ENCODE measurements at regions of chr9 and their contacts with region 1.

Region 1: DNA sequence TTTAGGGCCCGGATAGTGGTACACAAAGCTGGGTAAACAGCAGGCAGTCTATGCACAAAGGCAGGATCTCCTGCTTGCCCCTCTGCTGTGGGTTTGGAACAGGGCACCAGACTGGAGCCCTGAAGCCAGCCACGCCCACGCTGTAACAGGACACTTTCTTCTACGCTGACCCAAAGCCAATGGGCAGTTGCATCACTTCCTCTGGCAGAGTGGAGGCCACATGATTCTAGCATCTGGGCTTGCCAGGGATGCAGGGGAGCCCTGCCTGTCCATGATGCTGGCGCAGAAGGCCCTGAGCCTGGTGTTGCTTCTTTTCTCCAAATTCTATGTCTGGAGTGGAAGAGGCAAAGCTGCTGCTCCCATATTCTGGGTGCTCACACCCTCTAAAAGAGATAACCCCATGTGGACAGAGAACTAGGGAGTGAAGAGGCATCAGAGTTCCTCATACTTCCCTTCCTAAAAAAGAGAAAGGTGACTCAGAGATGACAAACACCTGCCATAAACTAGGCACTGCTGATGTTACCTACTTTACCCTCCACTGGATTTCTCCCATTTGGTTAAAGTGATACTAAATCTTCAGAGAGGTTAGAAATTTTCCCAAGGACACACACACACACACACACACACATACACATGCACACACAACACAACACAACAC is 260.3 kb upstream of the KLF4 start:
- DNase-seq: peak; percentile 96
- ATAC-seq: peak; percentile 78
- H3K4me3 ChIP-seq: no peak overlapping the region
- H3K27ac ChIP-seq: peak overlapping the region; percentile 81
- H3K4me1 ChIP-seq: peaks cover 19% of the 10 kb centered on the region
- H3K27me3 ChIP-seq: no peaks in the 10 kb centered on the region
- CTCF ChIP-seq: no peak
- POLR2A ChIP-seq: no peak
- RAD21 ChIP-seq: no peak

Region 2: GRCh38 chr9:106878924-106879323 is 871.0 kb before region 1 on chr9:
- CTCF ChIA-PET with region 1: no interaction called
- POLR2A ChIA-PET with region 1: no interaction called
- dilution Hi-C with region 1: no loop called
- in situ Hi-C with region 1: loop called (anchors 25 kb)
- intact Hi-C with region 1: no loop called
- DNase-seq: peak; percentile 99
- ATAC-seq: peak; percentile 86
- H3K4me3 ChIP-seq: no peak overlapping the region
- H3K27ac ChIP-seq: peak overlapping the region; percentile 13; the same call in 1 of the 2 replicates
- H3K4me1 ChIP-seq: peaks cover 26% of the 10 kb centered on the region
- H3K27me3 ChIP-seq: no peaks in the 10 kb centered on the region
- CTCF ChIP-seq: no peak
- POLR2A ChIP-seq: no peak
- RAD21 ChIP-seq: no peak

Region 3: DNA sequence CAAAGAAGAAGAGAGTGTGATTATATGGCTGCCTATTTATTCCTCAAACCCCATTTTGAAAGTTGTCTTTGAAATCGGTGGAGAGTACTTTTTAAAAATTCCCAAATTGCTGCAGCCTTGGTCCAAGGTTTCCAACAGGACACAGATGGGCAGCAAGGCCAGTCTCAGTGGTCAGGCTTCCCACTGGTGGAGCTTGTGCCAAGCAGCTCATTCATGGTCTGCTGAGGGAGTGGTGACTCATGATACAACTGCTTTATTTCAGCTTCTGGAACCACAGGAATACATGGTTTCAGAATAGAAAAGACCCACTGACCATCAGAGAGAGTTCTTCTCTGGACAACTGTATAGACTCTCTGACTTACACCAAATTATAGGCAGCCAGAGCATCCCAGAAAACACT is 412.7 kb after region 1 on chr9:
- CTCF ChIA-PET with region 1: no interaction called
- POLR2A ChIA-PET with region 1: no interaction called
- dilution Hi-C with region 1: no loop called
- in situ Hi-C with region 1: no loop called
- intact Hi-C with region 1: loop called (anchors 10 kb)
- DNase-seq: peak; percentile 80
- ATAC-seq: peak; percentile 91
- H3K4me3 ChIP-seq: no peak overlapping the region
- H3K27ac ChIP-seq: no peak overlapping the region
- H3K4me1 ChIP-seq: peaks cover 5% of the 10 kb centered on the region; the same call in 1 of the 2 replicates
- H3K27me3 ChIP-seq: peaks cover 5% of the 10 kb centered on the region
- CTCF ChIP-seq: no peak
- POLR2A ChIP-seq: no peak
- RAD21 ChIP-seq: no peak